Breast epithelium (tissue), 4 donors: ENCODE measurements at regions of chr2 and their contacts with region 1.

Region 1: GRCh38 chr2:211376410-211376809 is 820.0 kb downstream of the CPS1 start:
- DNase-seq: no peak
- H3K4me3 ChIP-seq: no peak overlapping the region
- H3K27ac ChIP-seq: no peak overlapping the region
- H3K4me1 ChIP-seq: no peaks in the 10 kb centered on the region
- H3K27me3 ChIP-seq: no peaks in the 10 kb centered on the region
- CTCF ChIP-seq: no peak
- POLR2A ChIP-seq: no peak

Region 2: GRCh38 chr2:210971431-210971830 is 405.0 kb before region 1 on chr2:
- intact Hi-C with region 1: loop called (anchors 10 kb)
- DNase-seq: no peak
- H3K4me3 ChIP-seq: no peak overlapping the region
- H3K27ac ChIP-seq: no peak overlapping the region
- H3K4me1 ChIP-seq: no peaks in the 10 kb centered on the region
- H3K27me3 ChIP-seq: no peaks in the 10 kb centered on the region
- CTCF ChIP-seq: no peak
- POLR2A ChIP-seq: no peak

Region 3: GRCh38 chr2:212124599-212124998 is 748.2 kb after region 1 on chr2:
- intact Hi-C with region 1: no loop called
- DNase-seq: no peak
- H3K4me3 ChIP-seq: peak overlapping the region in 2 of 3 donors; percentile 6 to 23
- H3K27ac ChIP-seq: no peak overlapping the region
- H3K4me1 ChIP-seq: no peaks in the 10 kb centered on the region
- H3K27me3 ChIP-seq: no peaks in the 10 kb centered on the region
- CTCF ChIP-seq: no peak
- POLR2A ChIP-seq: no peak

Region 4: GRCh38 chr2:212556296-212556695 is 1179.9 kb after region 1 on chr2:
- intact Hi-C with region 1: loop called (anchors 5 kb)
- DNase-seq: no peak
- H3K4me3 ChIP-seq: no peak overlapping the region
- H3K27ac ChIP-seq: no peak overlapping the region
- H3K4me1 ChIP-seq: no peaks in the 10 kb centered on the region
- H3K27me3 ChIP-seq: no peaks in the 10 kb centered on the region
- CTCF ChIP-seq: no peak
- POLR2A ChIP-seq: no peak